ENCODE measurements at regions of chr6 and their contacts with region 1.

Region 1: GRCh38 chr6:37169496-37170272 is at the start of gene PIM1:
- DNase-seq: peak; percentile 100
- H3K4me3 Mint-ChIP-seq: peak within 1 kb of the TSS; percentile 94
- H3K27ac Mint-ChIP-seq: peak within 1 kb of the TSS; percentile 98
- H3K4me1 Mint-ChIP-seq: peaks cover 36% of the 10 kb centered on the region
- H3K27me3 Mint-ChIP-seq: peaks cover 1% of the 10 kb centered on the region
- total RNA-seq, gene PIM1: 497 to 505 TPM

Region 2: GRCh38 chr6:36985808-36986703 is 183.6 kb before region 1 on chr6 and contains the start of gene MTCH1:
- CTCF ChIA-PET with region 1: interaction called, 3 read pairs
- POLR2A ChIA-PET with region 1: interaction called, 11 read pairs
- DNase-seq: peak; percentile 89
- H3K4me3 Mint-ChIP-seq: peak within 1 kb of the TSS; percentile 99
- H3K27ac Mint-ChIP-seq: peak within 1 kb of the TSS; percentile 92
- H3K4me1 Mint-ChIP-seq: peaks cover 21% of the 10 kb centered on the region
- H3K27me3 Mint-ChIP-seq: peaks cover 4% of the 10 kb centered on the region
- total RNA-seq, gene MTCH1: 131 TPM

Region 3: GRCh38 chr6:37051138-37052026 is 118.3 kb before region 1 on chr6:
- CTCF ChIA-PET with region 1: interaction called, 327 read pairs
- POLR2A ChIA-PET with region 1: interaction called, 1,021 read pairs
- DNase-seq: peak; percentile 94
- H3K4me3 Mint-ChIP-seq: peak overlapping the region; percentile 88
- H3K27ac Mint-ChIP-seq: peak overlapping the region; percentile 99
- H3K4me1 Mint-ChIP-seq: peaks cover 71% of the 10 kb centered on the region
- H3K27me3 Mint-ChIP-seq: no peaks in the 10 kb centered on the region

Region 4: GRCh38 chr6:37137201-37138090 is 32.2 kb before region 1 on chr6:
- CTCF ChIA-PET with region 1: interaction called, 5 read pairs
- POLR2A ChIA-PET with region 1: interaction called, 90 read pairs
- DNase-seq: peak; percentile 37
- H3K4me3 Mint-ChIP-seq: peak overlapping the region; percentile 51
- H3K27ac Mint-ChIP-seq: peak overlapping the region; percentile 72
- H3K4me1 Mint-ChIP-seq: peaks cover 61% of the 10 kb centered on the region
- H3K27me3 Mint-ChIP-seq: no peaks in the 10 kb centered on the region

Region 5: GRCh38 chr6:37190159-37190535 is 20.5 kb after region 1 on chr6:
- CTCF ChIA-PET with region 1: interaction called, 14 read pairs
- POLR2A ChIA-PET with region 1: interaction called, 218 read pairs
- DNase-seq: no peak
- H3K4me3 Mint-ChIP-seq: no peak overlapping the region
- H3K27ac Mint-ChIP-seq: peak overlapping the region; percentile 67
- H3K4me1 Mint-ChIP-seq: peaks cover 71% of the 10 kb centered on the region
- H3K27me3 Mint-ChIP-seq: no peaks in the 10 kb centered on the region

Region 6: GRCh38 chr6:37347670-37348111 is 178.0 kb after region 1 on chr6:
- CTCF ChIA-PET with region 1: no interaction called
- POLR2A ChIA-PET with region 1: no interaction called
- DNase-seq: no peak
- H3K4me3 Mint-ChIP-seq: no peak overlapping the region
- H3K27ac Mint-ChIP-seq: no peak overlapping the region
- H3K4me1 Mint-ChIP-seq: peaks cover 2% of the 10 kb centered on the region
- H3K27me3 Mint-ChIP-seq: peaks cover 26% of the 10 kb centered on the region

Region 7: DNA sequence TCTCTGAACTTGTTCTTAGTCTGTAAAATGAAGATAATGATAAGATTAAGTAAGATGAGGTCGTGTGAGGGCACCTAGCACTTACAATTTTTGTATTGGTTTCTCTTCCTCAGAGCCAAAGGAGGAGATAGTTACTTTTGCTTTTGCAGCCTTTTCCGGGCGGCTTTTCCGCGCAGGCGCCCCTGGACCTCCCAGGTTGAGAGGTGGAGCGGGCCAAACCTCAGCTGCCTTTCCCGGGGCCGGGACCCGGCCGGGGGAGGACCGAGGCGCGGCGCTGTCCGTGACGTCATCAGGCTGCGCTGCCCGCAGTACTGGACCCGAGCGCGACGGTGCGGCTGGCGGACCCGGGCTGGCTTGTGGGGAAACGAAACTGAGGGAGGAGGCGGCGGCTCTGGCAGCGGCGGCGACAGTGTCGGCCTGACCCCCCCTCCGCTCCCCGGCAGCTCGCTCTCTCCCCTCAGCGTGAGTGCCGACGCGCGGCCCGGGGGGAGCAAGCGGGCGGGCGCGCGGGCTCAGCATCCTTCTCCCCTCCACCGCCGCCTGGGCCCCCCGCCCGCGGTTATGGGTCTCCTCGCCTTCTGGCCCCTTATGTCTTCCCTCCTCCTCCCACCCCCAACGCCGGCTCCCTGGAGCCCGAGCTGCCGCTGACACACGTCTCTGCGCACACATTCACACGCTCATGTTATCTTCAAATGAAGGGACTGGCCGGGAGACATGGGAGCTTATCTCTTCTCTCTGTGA is 263.4 kb after region 1 on chr6 and contains the start of gene CMTR1:
- CTCF ChIA-PET with region 1: no interaction called
- POLR2A ChIA-PET with region 1: interaction called, 13 read pairs
- DNase-seq: peak; percentile 98
- H3K4me3 Mint-ChIP-seq: peak within 1 kb of the TSS; percentile 89
- H3K27ac Mint-ChIP-seq: peak within 1 kb of the TSS; percentile 96
- H3K4me1 Mint-ChIP-seq: peaks cover 47% of the 10 kb centered on the region
- H3K27me3 Mint-ChIP-seq: peaks cover 4% of the 10 kb centered on the region
- total RNA-seq, gene CMTR1: 97.7 to 99.7 TPM

Region 8: DNA sequence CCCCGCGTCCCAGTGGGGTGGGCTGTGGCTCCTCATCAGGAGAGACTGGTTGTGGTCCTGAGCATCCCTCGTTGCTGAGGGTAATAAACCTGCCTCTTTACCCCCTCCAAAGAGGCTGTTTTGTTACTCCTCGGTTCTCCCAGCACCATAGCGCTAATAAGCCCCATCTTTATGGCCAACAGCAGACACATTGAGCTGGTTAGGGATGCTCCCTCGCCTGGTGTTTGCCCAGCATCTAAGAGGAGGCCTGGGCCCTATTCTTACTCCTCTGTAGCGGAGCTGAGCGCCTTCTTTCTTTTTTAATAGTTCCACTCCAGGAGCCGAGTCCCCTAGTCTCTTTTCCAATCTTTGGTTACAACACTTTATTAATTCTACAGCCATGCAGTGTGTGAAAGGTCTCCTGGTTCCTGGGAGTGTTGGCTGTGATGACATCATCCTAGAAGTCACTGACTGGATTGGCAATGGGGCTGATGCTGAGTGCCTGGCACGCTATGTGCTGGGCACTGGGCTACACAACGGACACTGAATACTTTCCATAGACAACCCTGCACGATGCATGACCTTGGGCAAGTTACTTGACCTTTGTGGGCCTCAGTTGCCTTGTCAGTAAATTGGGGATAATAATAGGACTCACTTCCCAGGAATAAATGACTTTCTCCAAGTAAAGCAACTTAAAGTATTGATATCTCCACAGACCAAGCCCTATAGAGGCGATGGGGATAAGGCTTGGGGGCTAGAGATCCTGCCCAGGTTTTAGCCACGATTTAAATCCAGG is 380.7 kb after region 1 on chr6:
- CTCF ChIA-PET with region 1: no interaction called
- POLR2A ChIA-PET with region 1: no interaction called
- DNase-seq: no peak
- H3K4me3 Mint-ChIP-seq: no peak overlapping the region
- H3K27ac Mint-ChIP-seq: no peak overlapping the region
- H3K4me1 Mint-ChIP-seq: peaks cover 28% of the 10 kb centered on the region
- H3K27me3 Mint-ChIP-seq: no peaks in the 10 kb centered on the region

Measured in activated CD4-positive, alpha-beta memory T cell treated with anti-CD3 and anti-CD28 coated beads, Interleukin-2, amount 10 ng/mL, durations not matched to agents 7 days and 5 days (primary cell).